T-cell (primary cell): ENCODE measurements at regions of chrX and their contacts with region 1.

Region 1: DNA sequence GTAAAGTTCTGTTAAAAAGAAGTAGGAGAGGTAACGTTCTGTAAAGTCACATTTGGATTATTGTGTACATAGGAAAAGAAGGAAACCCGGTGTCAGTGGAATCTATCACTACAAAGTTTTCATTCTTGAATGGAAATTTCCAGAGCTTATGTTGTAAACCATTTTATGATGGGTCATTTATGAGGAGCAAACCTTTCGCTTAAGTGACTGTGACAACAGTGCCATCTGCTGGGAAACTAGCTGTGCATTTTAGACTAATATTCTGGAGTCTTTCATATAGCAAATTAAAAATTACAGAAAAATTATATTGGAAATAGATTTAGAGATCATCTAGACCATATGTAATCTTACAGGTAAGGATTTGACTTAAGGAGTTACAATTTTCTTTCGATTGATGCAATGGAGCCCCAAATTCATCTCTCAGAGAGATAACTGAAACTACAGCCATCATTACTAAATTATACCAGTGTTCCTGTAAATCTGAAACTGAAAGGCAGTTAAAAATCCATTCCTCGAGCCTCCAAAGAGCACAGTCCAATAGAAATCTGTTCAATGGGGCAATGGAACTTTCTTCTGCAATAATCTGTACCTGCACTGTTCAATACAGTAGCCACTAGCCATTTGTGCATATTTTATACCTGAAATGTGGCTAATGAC is 26.9 kb downstream of the ASB9 start:
- DNase-seq: peak in 26 of 35 experiments; percentile 0 to 70 (median 16)
- ATAC-seq: no peak
- H3K4me3 ChIP-seq: no peak overlapping the region
- H3K4me3 Mint-ChIP-seq: no peak overlapping the region
- H3K27ac ChIP-seq: no peak overlapping the region
- H3K27ac Mint-ChIP-seq: no peak overlapping the region
- H3K4me1 ChIP-seq: no peaks in the 10 kb centered on the region
- H3K4me1 Mint-ChIP-seq: peaks cover 0 to 2% (median 0%) of the 10 kb centered on the region in 3 donors
- H3K27me3 ChIP-seq: no peaks in the 10 kb centered on the region
- H3K27me3 Mint-ChIP-seq: peaks cover 0 to 3% of the 10 kb centered on the region in 2 donors

Region 2: GRCh38 chrX:15107367-15107988 is 135.5 kb before region 1 on chrX:
- CTCF ChIA-PET with region 1: interaction called, 4 to 10 read pairs
- POLR2A ChIA-PET with region 1: no interaction called
- DNase-seq: peak in 2 of 35 experiments; percentile 2 to 28
- ATAC-seq: peak in 2 of 4 experiments; percentile 43 to 46
- H3K4me3 ChIP-seq: no peak overlapping the region
- H3K4me3 Mint-ChIP-seq: no peak overlapping the region
- H3K27ac ChIP-seq: no peak overlapping the region
- H3K27ac Mint-ChIP-seq: no peak overlapping the region
- H3K4me1 ChIP-seq: no peaks in the 10 kb centered on the region
- H3K4me1 Mint-ChIP-seq: peaks cover 7 to 17% (median 11%) of the 10 kb centered on the region in 3 donors
- H3K27me3 ChIP-seq: no peaks in the 10 kb centered on the region
- H3K27me3 Mint-ChIP-seq: no peaks in the 10 kb centered on the region

Region 3: DNA sequence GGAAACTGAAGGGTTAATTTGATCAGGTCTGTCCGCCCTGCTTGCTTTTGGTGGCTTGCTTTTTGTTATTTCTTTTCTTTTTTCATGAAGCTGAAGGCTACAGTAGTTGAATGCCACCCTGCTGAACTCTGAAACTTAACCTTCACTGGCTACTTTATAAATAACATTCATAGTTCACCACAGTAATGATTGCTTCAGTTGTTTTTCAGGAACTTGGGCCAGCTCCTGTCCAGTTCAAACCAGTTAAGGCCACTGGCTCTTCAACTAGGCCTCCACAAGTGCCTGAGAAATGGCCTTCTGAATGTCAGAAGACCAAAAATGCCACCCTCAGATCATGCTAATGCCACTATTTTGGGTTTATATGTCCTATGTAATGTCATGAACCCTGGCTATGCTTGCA is 34.6 kb after region 1 on chrX:
- CTCF ChIA-PET with region 1: no interaction called
- POLR2A ChIA-PET with region 1: no interaction called
- DNase-seq: no peak
- ATAC-seq: no peak
- H3K4me3 ChIP-seq: no peak overlapping the region
- H3K4me3 Mint-ChIP-seq: no peak overlapping the region
- H3K27ac ChIP-seq: no peak overlapping the region
- H3K27ac Mint-ChIP-seq: no peak overlapping the region
- H3K4me1 ChIP-seq: no peaks in the 10 kb centered on the region
- H3K4me1 Mint-ChIP-seq: no peaks in the 10 kb centered on the region
- H3K27me3 ChIP-seq: no peaks in the 10 kb centered on the region
- H3K27me3 Mint-ChIP-seq: peaks cover 4 to 24% of the 10 kb centered on the region in 2 donors